K562 (cell line): ENCODE measurements at regions of chr7 and their contacts with region 1.

Region 1: DNA sequence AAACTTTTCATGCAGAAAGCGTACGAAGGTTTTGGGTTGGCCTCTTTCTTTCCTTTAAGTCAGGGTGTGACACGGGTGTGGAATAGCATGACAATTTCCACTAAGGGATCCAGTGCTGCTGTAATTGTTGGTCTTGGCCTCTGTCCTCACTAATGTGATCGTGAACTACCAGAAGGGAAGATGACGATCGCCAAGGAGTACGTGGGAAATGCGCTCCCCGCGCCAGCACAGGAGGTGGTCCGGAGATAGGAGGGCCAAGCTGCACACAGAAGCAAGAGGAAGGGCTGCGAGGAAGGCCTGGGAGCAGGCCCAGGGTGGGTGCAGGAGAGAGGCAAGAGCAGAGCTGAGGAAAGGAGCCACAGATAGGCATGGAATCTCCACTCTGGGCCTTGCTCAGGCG is 79.7 kb upstream of the PODXL start:
- DNase-seq: no peak
- ATAC-seq: no peak
- H3K4me3 ChIP-seq: no peak overlapping the region
- H3K27ac ChIP-seq: no peak overlapping the region
- H3K4me1 ChIP-seq: no peaks in the 10 kb centered on the region; a peak in 1 of 5 replicates
- H3K27me3 ChIP-seq: peaks cover 26 to 69% of the 10 kb centered on the region in 2 experiments
- CTCF ChIP-seq: no peak
- EP300 ChIP-seq: no peak
- POLR2A ChIP-seq: no peak
- RAD21 ChIP-seq: no peak

Region 2: GRCh38 chr7:131546583-131547111 is 89.4 kb before region 1 on chr7:
- CTCF ChIA-PET with region 1: no interaction called
- POLR2A ChIA-PET with region 1: no interaction called
- in situ Hi-C with region 1: no loop called
- intact Hi-C with region 1: loop called (anchors 5 kb)
- DNase-seq: peak; percentile 83 to 94 (median 90)
- ATAC-seq: peak; percentile 85
- H3K4me3 ChIP-seq: no peak overlapping the region
- H3K27ac ChIP-seq: no peak overlapping the region
- H3K4me1 ChIP-seq: peaks cover 3 to 5% of the 10 kb centered on the region in 2 experiments; a peak in 2 of 5 replicates
- H3K27me3 ChIP-seq: peaks cover 22 to 64% of the 10 kb centered on the region in 2 experiments
- CTCF ChIP-seq: peak; percentile 99
- EP300 ChIP-seq: no peak
- POLR2A ChIP-seq: no peak
- RAD21 ChIP-seq: peak; percentile 32 to 68; a peak in 2 of 4 replicates